Caco-2 (cell line): ENCODE measurements at regions of chr11 and their contacts with region 1.

Region 1: DNA sequence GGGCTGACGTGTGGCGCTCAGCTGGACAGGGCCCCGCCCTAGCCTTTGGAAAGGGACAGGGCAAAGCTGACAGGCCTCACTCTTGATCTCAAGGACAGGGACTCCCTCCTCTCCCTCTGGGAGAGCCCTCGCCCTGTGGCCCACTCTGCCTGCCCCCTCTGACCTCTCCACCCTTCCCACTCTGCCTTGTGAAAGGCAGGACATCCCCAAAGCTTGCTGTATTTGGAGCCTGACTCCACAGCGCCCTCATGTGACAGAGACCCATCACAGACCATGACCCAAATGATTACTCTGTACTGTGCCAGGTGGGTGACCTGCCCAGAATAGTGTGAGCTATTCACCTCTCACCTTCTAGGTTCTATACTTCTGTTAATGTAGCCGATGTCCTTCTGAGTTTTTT is 18.8 kb downstream of the P2RY2 start:
- DNase-seq: peak; percentile 77 to 81
- H3K4me3 ChIP-seq: no peak overlapping the region
- H3K4me3 Mint-ChIP-seq: no peak overlapping the region
- H3K27ac Mint-ChIP-seq: peak overlapping the region; percentile 32
- H3K4me1 ChIP-seq: peaks cover 4% of the 10 kb centered on the region; the same call in 1 of the 2 replicates
- H3K4me1 Mint-ChIP-seq: peaks cover under 1% of the 10 kb centered on the region
- H3K27me3 ChIP-seq: no peaks in the 10 kb centered on the region
- H3K27me3 Mint-ChIP-seq: no peaks in the 10 kb centered on the region
- CTCF ChIP-seq: peak; percentile 75 to 92

Region 2: GRCh38 chr11:72831513-72832300 is 405.1 kb before region 1 on chr11:
- CTCF ChIA-PET with region 1: interaction called, 4 read pairs
- POLR2A ChIA-PET with region 1: no interaction called
- intact Hi-C with region 1: loop called (anchors 1 kb)
- DNase-seq: peak; percentile 89 to 93
- H3K4me3 ChIP-seq: no peak overlapping the region
- H3K4me3 Mint-ChIP-seq: no peak overlapping the region
- H3K27ac Mint-ChIP-seq: peak overlapping the region; percentile 58
- H3K4me1 ChIP-seq: peaks cover 10% of the 10 kb centered on the region
- H3K4me1 Mint-ChIP-seq: peaks cover 24% of the 10 kb centered on the region
- H3K27me3 ChIP-seq: no peaks in the 10 kb centered on the region
- H3K27me3 Mint-ChIP-seq: no peaks in the 10 kb centered on the region
- CTCF ChIP-seq: peak; percentile 98 to 99

Region 3: DNA sequence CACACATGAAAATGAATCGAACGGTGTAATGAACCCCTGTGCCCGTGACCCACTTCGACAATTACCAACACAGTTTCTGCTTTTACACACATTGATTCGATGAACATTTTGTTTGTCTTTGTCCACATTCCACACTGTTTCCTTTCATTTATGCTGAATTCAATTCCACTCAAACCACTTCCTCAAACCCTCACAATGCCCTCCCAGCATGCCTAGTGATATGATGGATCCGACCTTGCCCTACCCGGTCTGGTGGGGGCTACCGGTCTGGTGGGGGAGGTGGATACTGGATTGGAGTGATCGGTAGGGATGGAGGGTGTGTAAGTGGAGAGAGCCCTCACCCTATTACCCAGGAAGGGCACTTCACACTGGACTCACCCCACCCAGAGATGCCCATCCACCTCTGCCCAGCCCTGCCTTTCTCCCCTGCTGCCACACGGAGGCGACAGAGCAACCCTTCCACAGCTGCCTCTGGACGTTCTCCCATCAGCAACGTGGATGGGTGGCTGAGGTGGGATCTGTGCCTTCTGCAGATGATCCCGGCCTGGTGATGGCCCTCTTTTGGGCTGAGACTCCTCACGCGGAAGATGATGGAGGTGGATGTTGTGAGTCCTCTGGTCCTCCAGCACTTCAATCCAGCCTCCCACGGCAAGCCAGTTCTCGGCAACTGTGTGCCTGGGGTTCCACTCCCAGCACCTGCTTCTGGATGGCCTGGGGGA is 51.7 kb before region 1 on chr11:
- CTCF ChIA-PET with region 1: interaction called, 41 read pairs
- POLR2A ChIA-PET with region 1: no interaction called
- intact Hi-C with region 1: loop called (anchors 1 kb)
- DNase-seq: peak; percentile 85 to 88
- H3K4me3 ChIP-seq: no peak overlapping the region
- H3K4me3 Mint-ChIP-seq: no peak overlapping the region
- H3K27ac Mint-ChIP-seq: no peak overlapping the region
- H3K4me1 ChIP-seq: peaks cover 21% of the 10 kb centered on the region
- H3K4me1 Mint-ChIP-seq: peaks cover 7% of the 10 kb centered on the region
- H3K27me3 ChIP-seq: no peaks in the 10 kb centered on the region
- H3K27me3 Mint-ChIP-seq: no peaks in the 10 kb centered on the region
- CTCF ChIP-seq: peak; percentile 98 to 99

Region 4: GRCh38 chr11:73195231-73195992 is 41.4 kb before region 1 on chr11:
- CTCF ChIA-PET with region 1: interaction called, 17 read pairs
- POLR2A ChIA-PET with region 1: no interaction called
- intact Hi-C with region 1: no loop called
- DNase-seq: peak; percentile 77 to 93
- H3K4me3 ChIP-seq: no peak overlapping the region
- H3K4me3 Mint-ChIP-seq: peak overlapping the region; percentile 6
- H3K27ac Mint-ChIP-seq: peak overlapping the region; percentile 30
- H3K4me1 ChIP-seq: peaks cover 81% of the 10 kb centered on the region
- H3K4me1 Mint-ChIP-seq: peaks cover 65% of the 10 kb centered on the region
- H3K27me3 ChIP-seq: no peaks in the 10 kb centered on the region
- H3K27me3 Mint-ChIP-seq: no peaks in the 10 kb centered on the region
- CTCF ChIP-seq: peak in 1 of 2 experiments; percentile 2

Region 5: DNA sequence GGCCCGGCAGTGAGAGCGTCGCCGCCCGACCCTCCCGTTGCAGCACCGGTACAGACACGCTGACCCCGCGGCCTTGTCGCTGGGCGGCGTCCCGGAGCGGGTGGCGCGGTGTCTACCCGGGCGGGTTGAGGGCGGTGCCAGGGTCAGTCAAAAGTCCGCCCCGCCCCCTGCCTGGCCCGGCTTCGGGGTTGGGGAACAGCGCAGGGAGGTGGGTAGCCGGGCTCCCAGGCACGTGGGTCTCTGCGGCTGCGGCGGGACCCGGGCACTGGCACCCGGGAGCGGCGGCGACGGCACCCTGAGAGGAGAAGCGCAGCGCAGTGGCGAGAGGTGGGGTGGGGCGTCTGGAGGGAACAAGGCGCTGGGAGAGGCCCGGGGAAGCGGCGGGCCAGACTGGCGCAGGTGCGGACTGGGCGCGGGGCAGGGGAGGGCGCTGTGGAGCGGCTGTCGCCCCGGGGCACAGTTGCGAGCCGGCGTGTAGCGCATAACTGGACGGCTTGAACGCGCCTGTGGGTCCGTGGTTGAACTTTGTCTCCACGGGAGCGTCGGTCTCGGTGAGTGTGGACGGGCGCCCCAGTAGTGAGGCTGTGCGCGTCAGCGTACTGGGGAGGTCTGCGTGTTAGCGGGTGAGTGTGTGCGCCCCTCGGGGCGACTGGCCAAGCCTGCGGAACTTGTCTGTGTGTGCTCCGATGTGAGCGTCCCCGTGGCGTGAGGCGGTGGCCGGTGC is 18.6 kb before region 1 on chr11 and contains the start of gene P2RY2:
- CTCF ChIA-PET with region 1: interaction called, 25 read pairs
- POLR2A ChIA-PET with region 1: no interaction called
- intact Hi-C with region 1: no loop called
- DNase-seq: peak; percentile 87 to 94
- H3K4me3 ChIP-seq: peak within 1 kb of the TSS; percentile 57
- H3K4me3 Mint-ChIP-seq: peak within 1 kb of the TSS; percentile 81
- H3K27ac Mint-ChIP-seq: peak within 1 kb of the TSS; percentile 40
- H3K4me1 ChIP-seq: peaks cover 38% of the 10 kb centered on the region
- H3K4me1 Mint-ChIP-seq: peaks cover 23% of the 10 kb centered on the region
- H3K27me3 ChIP-seq: no peaks in the 10 kb centered on the region
- H3K27me3 Mint-ChIP-seq: no peaks in the 10 kb centered on the region
- CTCF ChIP-seq: peak; percentile 87
- total RNA-seq, gene P2RY2: 10.4 and 11.4 TPM in 2 replicates

Region 6: DNA sequence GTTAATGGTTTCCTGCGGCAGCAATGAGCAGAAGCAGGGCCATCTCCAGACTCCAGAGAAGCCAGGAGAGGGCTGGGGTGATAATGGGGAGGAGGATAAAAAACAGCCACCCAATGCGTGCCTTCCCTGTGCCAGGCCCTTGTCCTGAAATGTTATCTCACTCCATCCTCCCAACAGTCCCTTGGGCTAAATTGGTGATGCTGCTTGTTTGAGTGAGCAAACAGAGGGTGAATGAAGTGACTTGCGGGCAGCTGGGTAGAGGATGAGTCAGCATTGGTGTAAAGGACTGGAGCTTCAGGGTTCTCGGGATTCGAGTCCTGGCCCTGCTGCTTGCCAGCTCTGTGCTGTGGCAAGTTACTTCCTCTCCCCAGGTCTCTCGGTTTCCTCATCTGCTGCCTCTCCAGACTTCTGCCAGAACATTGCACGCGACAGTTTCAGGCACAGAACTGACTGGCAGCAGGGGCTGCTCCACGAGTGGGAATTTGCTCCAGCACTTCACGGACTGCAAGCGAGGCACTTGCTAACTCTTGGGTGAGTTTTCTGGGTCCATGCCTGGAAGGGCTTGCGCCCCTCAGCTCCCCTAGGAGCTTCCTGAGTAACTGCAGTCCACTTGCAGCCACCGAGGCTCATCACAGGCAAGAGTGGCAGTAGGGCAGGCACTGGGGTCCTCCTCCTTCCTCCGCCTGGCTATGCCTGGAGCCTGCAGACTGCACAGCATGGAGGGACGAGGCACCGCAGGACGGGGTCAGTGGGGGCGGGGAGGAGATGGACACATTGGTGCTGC is 35.3 kb after region 1 on chr11 and contains the start of gene P2RY6:
- CTCF ChIA-PET with region 1: interaction called, 11 read pairs
- POLR2A ChIA-PET with region 1: no interaction called
- intact Hi-C with region 1: loop called (anchors 1 kb)
- DNase-seq: peak; percentile 88 to 93
- H3K4me3 ChIP-seq: peak within 1 kb of the TSS; percentile 38
- H3K4me3 Mint-ChIP-seq: peak within 1 kb of the TSS; percentile 80
- H3K27ac Mint-ChIP-seq: peak within 1 kb of the TSS; percentile 99
- H3K4me1 ChIP-seq: peaks cover 79% of the 10 kb centered on the region
- H3K4me1 Mint-ChIP-seq: peaks cover 81% of the 10 kb centered on the region
- H3K27me3 ChIP-seq: no peaks in the 10 kb centered on the region
- H3K27me3 Mint-ChIP-seq: no peaks in the 10 kb centered on the region
- CTCF ChIP-seq: no peak
- total RNA-seq, gene P2RY6: 48.4 and 55.7 TPM in 2 replicates

Region 7: GRCh38 chr11:73478738-73479347 is 242.0 kb after region 1 on chr11:
- CTCF ChIA-PET with region 1: no interaction called
- POLR2A ChIA-PET with region 1: no interaction called
- intact Hi-C with region 1: no loop called
- DNase-seq: peak in 1 of 2 experiments; percentile 63
- H3K4me3 ChIP-seq: no peak overlapping the region
- H3K4me3 Mint-ChIP-seq: no peak overlapping the region
- H3K27ac Mint-ChIP-seq: no peak overlapping the region
- H3K4me1 ChIP-seq: peaks cover 5% of the 10 kb centered on the region; the same call in 1 of the 2 replicates
- H3K4me1 Mint-ChIP-seq: peaks cover 6% of the 10 kb centered on the region
- H3K27me3 ChIP-seq: no peaks in the 10 kb centered on the region
- H3K27me3 Mint-ChIP-seq: no peaks in the 10 kb centered on the region
- CTCF ChIP-seq: peak; percentile 95 to 98